Naive thymus-derived CD4-positive, alpha-beta T cell (primary cell): ENCODE measurements at regions of chr10 and their contacts with region 1.

Region 1: DNA sequence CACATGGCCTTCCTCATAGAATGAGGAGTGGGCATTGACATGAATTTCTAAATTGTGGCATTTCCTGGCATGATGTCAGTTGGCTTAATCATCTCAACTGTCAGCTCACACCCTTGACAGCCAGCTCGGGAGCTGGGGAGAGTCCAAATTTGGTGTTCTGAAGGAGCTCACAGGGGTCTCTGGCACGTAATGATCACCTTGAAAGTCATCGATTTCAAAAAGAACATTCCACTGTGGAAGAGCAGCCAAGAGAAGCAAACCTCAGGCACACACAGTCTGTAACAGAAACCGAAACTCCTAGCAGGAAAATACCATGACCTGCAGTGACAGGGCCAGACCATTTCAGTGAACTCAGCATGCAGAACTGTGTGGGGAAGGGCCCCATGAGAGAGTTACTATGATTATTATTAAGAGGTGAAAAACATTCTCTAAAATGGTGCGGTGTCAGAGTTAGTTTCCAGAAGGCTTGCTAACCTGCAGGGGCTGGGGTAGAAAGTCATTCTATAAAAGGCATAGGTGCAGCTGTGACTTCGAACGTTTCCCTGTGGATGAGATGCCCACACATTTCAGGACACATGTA is 26.4 kb upstream of the KLF6 start:
- DNase-seq: peak in 6 of 9 donors; percentile 22 to 54 (median 32)
- ATAC-seq: peak; percentile 62
- H3K4me3 ChIP-seq: peak overlapping the region; percentile 33
- H3K4me3 Mint-ChIP-seq: peak overlapping the region; percentile 10 to 85 (median 70)
- H3K27ac ChIP-seq: peak overlapping the region; percentile 71
- H3K27ac Mint-ChIP-seq: peak overlapping the region in 6 of 9 donors; percentile 67 to 91 (median 88)
- H3K4me1 ChIP-seq: peaks cover 52 to 65% of the 10 kb centered on the region in 2 donors
- H3K4me1 Mint-ChIP-seq: peaks cover 41 to 80% (median 63%) of the 10 kb centered on the region in 7 donors
- H3K27me3 ChIP-seq: no peaks in the 10 kb centered on the region
- H3K27me3 Mint-ChIP-seq: no peaks in the 10 kb centered on the region

Region 2: DNA sequence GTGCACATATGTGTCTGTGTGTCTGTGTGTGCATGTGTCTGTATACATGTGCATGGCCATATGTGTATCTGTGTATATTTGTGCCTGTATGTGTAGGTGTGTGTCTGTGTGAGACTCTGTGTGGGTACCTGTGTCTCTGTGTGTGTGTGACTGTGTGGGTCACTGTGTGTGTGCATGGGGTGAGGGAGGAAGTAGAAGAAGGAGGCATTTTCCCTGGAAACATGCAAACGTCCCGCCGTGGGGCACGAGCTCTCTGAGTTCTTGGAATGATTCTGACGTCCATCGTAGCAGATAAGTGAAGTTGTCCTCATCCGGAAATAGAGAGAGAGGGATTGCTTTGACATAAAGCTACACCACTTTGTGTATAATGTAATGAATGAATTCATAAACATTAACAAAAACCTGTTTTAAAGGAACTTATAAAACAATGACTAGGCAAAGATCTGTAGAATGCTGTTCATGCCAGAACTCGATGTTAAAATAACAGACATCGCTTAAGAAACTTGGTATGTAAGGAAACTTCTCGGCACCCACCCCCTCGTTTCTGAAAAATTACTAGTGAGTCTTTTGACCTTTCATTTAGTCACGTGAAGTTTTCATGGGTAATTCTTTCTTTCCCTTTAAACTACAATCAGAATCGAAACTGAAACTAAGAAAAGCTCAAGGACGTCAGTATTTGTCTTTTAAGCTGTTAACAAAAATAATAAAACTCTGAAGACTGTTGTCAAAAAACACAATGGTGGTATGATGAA is 17.2 kb after region 1 on chr10:
- CTCF ChIA-PET with region 1: no interaction called
- POLR2A ChIA-PET with region 1: interaction called, 32 read pairs
- intact Hi-C with region 1: loop called (anchors 1 kb)
- DNase-seq: peak in 6 of 9 donors; percentile 40 to 66 (median 54)
- ATAC-seq: peak; percentile 63
- H3K4me3 ChIP-seq: peak overlapping the region; percentile 65
- H3K4me3 Mint-ChIP-seq: peak overlapping the region; percentile 73 to 88 (median 78)
- H3K27ac ChIP-seq: peak overlapping the region; percentile 73
- H3K27ac Mint-ChIP-seq: peak overlapping the region; percentile 80 to 92 (median 90)
- H3K4me1 ChIP-seq: peaks cover 15 to 17% of the 10 kb centered on the region in 2 donors
- H3K4me1 Mint-ChIP-seq: peaks cover 12 to 54% (median 22%) of the 10 kb centered on the region in 7 donors
- H3K27me3 ChIP-seq: no peaks in the 10 kb centered on the region
- H3K27me3 Mint-ChIP-seq: no peaks in the 10 kb centered on the region

Region 3: DNA sequence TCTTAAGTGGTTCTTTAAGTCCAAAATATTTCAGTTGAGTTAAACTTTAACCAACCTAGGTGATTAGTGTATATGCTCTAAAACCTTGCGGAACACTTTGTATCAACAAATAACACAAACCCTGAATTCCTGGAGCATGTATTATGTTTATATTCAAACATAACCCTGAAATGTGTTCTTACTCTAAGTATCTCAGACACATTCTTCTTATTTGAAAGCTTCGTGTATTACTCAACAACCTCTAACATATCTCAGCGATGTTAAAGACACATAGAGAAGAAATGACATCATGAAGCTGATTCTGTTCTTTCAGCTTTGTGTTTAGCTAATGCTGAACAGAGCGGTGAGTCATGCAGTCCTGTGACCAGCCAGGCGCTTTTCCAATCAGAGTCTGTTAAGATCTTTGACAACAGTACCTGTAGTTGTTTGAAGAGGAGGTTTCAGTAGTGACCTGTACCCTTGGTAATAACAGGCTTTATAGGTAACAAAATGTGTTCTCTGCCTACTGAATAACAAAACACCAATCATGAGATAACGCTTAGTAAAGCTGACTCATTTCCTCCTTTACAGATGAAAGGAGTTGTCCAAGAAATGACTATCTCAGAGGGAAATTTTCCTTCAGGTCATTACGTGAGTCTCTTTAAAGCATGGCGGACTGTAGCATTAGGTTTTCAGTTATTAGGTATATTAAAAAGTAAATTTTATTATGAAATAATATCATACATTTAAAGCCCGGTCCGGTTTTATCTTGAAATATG is 40.9 kb after region 1 on chr10:
- CTCF ChIA-PET with region 1: no interaction called
- POLR2A ChIA-PET with region 1: no interaction called
- intact Hi-C with region 1: loop called in 1 of 2 experiments (anchors 1 kb)
- DNase-seq: peak in 2 of 9 donors; percentile 28 to 55
- ATAC-seq: peak; percentile 87
- H3K4me3 ChIP-seq: no peak overlapping the region
- H3K4me3 Mint-ChIP-seq: peak overlapping the region in 1 of 10 donors; percentile 55
- H3K27ac ChIP-seq: no peak overlapping the region
- H3K27ac Mint-ChIP-seq: peak overlapping the region in 3 of 9 donors; percentile 70 to 92 (median 80)
- H3K4me1 ChIP-seq: peaks cover 5 to 12% of the 10 kb centered on the region in 2 donors
- H3K4me1 Mint-ChIP-seq: peaks cover 0 to 35% (median 8%) of the 10 kb centered on the region in 7 donors
- H3K27me3 ChIP-seq: no peaks in the 10 kb centered on the region
- H3K27me3 Mint-ChIP-seq: no peaks in the 10 kb centered on the region

Region 4: GRCh38 chr10:3887885-3888476 is 76.6 kb after region 1 on chr10:
- CTCF ChIA-PET with region 1: no interaction called
- POLR2A ChIA-PET with region 1: no interaction called
- intact Hi-C with region 1: loop called in 1 of 2 experiments (anchors 5 kb)
- DNase-seq: no peak
- ATAC-seq: peak; percentile 85
- H3K4me3 ChIP-seq: no peak overlapping the region
- H3K4me3 Mint-ChIP-seq: peak overlapping the region in 1 of 10 donors; percentile 62
- H3K27ac ChIP-seq: no peak overlapping the region
- H3K27ac Mint-ChIP-seq: peak overlapping the region in 1 of 9 donors; percentile 84
- H3K4me1 ChIP-seq: peaks cover 0 to 32% of the 10 kb centered on the region in 2 donors
- H3K4me1 Mint-ChIP-seq: peaks cover 4 to 43% (median 10%) of the 10 kb centered on the region in 7 donors
- H3K27me3 ChIP-seq: no peaks in the 10 kb centered on the region
- H3K27me3 Mint-ChIP-seq: peaks cover 0 to 5% (median 0%) of the 10 kb centered on the region in 5 donors

Region 5: GRCh38 chr10:3948843-3949242 is 137.5 kb after region 1 on chr10:
- CTCF ChIA-PET with region 1: no interaction called
- POLR2A ChIA-PET with region 1: interaction called, 3 read pairs
- intact Hi-C with region 1: loop called in 1 of 2 experiments (anchors 2 kb)
- DNase-seq: peak; percentile 21 to 79 (median 61)
- ATAC-seq: peak; percentile 94
- H3K4me3 ChIP-seq: no peak overlapping the region
- H3K4me3 Mint-ChIP-seq: peak overlapping the region in 9 of 10 donors; percentile 16 to 67 (median 47)
- H3K27ac ChIP-seq: no peak overlapping the region
- H3K27ac Mint-ChIP-seq: peak overlapping the region; percentile 32 to 97 (median 78)
- H3K4me1 ChIP-seq: peaks cover 20 to 59% of the 10 kb centered on the region in 2 donors
- H3K4me1 Mint-ChIP-seq: peaks cover 14 to 60% (median 36%) of the 10 kb centered on the region in 7 donors
- H3K27me3 ChIP-seq: no peaks in the 10 kb centered on the region
- H3K27me3 Mint-ChIP-seq: no peaks in the 10 kb centered on the region

Region 6: DNA sequence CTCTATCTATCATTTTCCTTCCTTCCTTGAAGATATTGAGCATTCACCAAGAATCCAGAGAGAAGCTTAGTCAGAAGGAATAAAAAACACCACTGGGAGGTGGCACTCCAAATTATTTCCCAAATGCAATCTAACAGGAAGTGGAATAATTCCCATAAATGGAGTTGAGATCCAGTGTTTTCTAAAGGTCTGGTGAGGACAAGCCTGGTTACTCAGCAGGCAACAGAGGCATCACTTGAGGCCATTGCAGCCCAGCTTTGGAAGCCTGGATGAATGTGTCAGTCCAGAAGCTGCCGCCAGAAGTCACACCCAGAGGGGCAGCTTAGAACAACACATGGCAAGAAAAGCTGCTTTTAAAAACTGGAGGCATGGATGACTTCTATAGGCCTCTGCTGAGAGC is 262.5 kb after region 1 on chr10:
- CTCF ChIA-PET with region 1: no interaction called
- POLR2A ChIA-PET with region 1: interaction called, 3 read pairs
- intact Hi-C with region 1: loop called in 1 of 2 experiments (anchors 2 kb)
- DNase-seq: no peak
- ATAC-seq: no peak
- H3K4me3 ChIP-seq: no peak overlapping the region
- H3K4me3 Mint-ChIP-seq: no peak overlapping the region
- H3K27ac ChIP-seq: no peak overlapping the region
- H3K27ac Mint-ChIP-seq: peak overlapping the region in 2 of 9 donors; percentile 40 to 88
- H3K4me1 ChIP-seq: peaks cover 11 to 32% of the 10 kb centered on the region in 2 donors
- H3K4me1 Mint-ChIP-seq: peaks cover 12 to 45% (median 23%) of the 10 kb centered on the region in 7 donors
- H3K27me3 ChIP-seq: no peaks in the 10 kb centered on the region
- H3K27me3 Mint-ChIP-seq: no peaks in the 10 kb centered on the region